IMR-90 (cell line): ENCODE measurements at regions of chr5 and their contacts with region 1.

Region 1: GRCh38 chr5:108531367-108532128 is 149.7 kb upstream of the FBXL17 start:
- DNase-seq: peak; percentile 91
- ATAC-seq: peak; percentile 95
- H3K4me3 ChIP-seq: no peak overlapping the region
- H3K27ac ChIP-seq: peak overlapping the region; percentile 96
- H3K4me1 ChIP-seq: peaks cover 18% of the 10 kb centered on the region
- H3K27me3 ChIP-seq: no peaks in the 10 kb centered on the region
- CTCF ChIP-seq: no peak
- POLR2A ChIP-seq: no peak
- RAD21 ChIP-seq: no peak

Region 2: GRCh38 chr5:108136493-108136892 is 395.1 kb before region 1 on chr5:
- CTCF ChIA-PET with region 1: no interaction called
- POLR2A ChIA-PET with region 1: no interaction called
- dilution Hi-C with region 1: no loop called
- in situ Hi-C with region 1: no loop called
- intact Hi-C with region 1: no loop called
- DNase-seq: no peak
- ATAC-seq: no peak
- H3K4me3 ChIP-seq: no peak overlapping the region
- H3K27ac ChIP-seq: no peak overlapping the region
- H3K4me1 ChIP-seq: no peaks in the 10 kb centered on the region
- H3K27me3 ChIP-seq: no peaks in the 10 kb centered on the region
- CTCF ChIP-seq: no peak
- POLR2A ChIP-seq: no peak
- RAD21 ChIP-seq: no peak

Region 3: DNA sequence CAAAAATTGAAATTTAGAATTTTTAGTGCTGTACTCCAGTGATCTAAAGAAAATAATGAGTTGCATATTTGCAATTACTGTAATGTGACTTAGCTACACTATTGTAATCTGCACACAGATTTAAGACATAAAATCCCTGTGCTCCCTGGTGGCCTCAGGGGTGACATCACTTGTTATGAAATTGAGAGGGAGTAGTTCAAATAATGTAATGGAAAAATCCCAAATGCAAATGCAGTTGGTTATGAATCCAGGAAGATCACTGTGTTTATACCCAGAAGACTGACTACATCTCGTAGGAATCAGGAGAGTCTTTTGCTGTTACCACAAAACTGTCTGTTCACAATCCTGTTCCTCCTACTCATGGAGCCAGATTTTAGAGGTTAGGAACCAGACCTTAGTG is 29.0 kb after region 1 on chr5:
- CTCF ChIA-PET with region 1: no interaction called
- POLR2A ChIA-PET with region 1: no interaction called
- dilution Hi-C with region 1: no loop called
- in situ Hi-C with region 1: no loop called
- intact Hi-C with region 1: loop called (anchors 1 kb)
- DNase-seq: peak; percentile 98
- ATAC-seq: peak; percentile 96
- H3K4me3 ChIP-seq: no peak overlapping the region
- H3K27ac ChIP-seq: peak overlapping the region; percentile 100; the same call in 1 of the 2 replicates
- H3K4me1 ChIP-seq: peaks cover 10% of the 10 kb centered on the region
- H3K27me3 ChIP-seq: no peaks in the 10 kb centered on the region
- CTCF ChIP-seq: no peak
- POLR2A ChIP-seq: no peak
- RAD21 ChIP-seq: 0 out of 2 replicates have a peak, but pooled peaks have one; percentile 1

Region 4: GRCh38 chr5:108876451-108876850 is 344.9 kb after region 1 on chr5:
- CTCF ChIA-PET with region 1: no interaction called
- POLR2A ChIA-PET with region 1: no interaction called
- dilution Hi-C with region 1: no loop called
- in situ Hi-C with region 1: no loop called
- intact Hi-C with region 1: no loop called
- DNase-seq: no peak
- ATAC-seq: no peak
- H3K4me3 ChIP-seq: no peak overlapping the region
- H3K27ac ChIP-seq: no peak overlapping the region
- H3K4me1 ChIP-seq: no peaks in the 10 kb centered on the region
- H3K27me3 ChIP-seq: no peaks in the 10 kb centered on the region
- CTCF ChIP-seq: no peak
- POLR2A ChIP-seq: no peak
- RAD21 ChIP-seq: no peak